Heart right ventricle (tissue), 16 donors: ENCODE measurements at regions of chr17 and their contacts with region 1.

Region 1: DNA sequence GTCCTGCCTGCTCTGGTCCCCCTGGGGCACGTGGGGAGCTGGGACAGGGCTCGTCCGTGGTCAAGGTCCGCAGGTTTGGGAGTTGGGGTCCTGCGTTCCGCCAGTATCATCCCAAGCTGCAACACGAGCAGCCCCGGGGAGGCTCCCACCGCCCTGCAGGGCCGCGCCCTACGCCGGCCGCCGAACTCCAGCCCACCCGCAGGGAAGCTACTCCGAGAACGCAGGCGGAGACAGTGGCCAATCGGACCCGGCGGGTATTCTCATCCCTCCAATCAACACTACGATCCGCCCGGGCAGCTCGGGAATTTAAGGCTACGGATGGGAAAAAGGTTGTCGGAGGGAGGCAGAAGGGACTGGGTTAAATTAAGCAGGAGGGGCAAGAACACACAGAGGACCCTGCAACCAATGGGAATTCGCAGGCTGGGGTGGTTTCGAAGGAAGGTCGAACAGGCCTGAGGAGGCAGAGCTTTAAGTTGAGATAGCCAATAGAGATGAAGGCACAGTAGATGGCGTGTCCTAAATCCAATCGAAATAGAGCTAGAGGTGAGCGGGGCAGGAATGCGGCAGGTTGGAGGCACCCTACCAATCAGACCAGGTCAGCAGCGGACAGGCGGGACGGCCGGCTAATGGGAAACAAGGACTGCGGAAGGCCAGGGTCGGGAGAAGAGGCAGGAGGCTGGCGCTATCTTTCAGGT is 626 bp downstream of the SPAG7 start:
- DNase-seq: peak; percentile 96 to 99
- ATAC-seq: peak; percentile 88 to 95 (median 92)
- H3K4me3 ChIP-seq: peak overlapping the region; percentile 53 to 82 (median 72)
- H3K27ac ChIP-seq: peak overlapping the region; percentile 89 to 97 (median 96)
- H3K4me1 ChIP-seq: peaks cover 11 to 45% (median 34%) of the 10 kb centered on the region in 9 donors
- H3K27me3 ChIP-seq: no peaks in the 10 kb centered on the region
- CTCF ChIP-seq: no peak

Region 2: DNA sequence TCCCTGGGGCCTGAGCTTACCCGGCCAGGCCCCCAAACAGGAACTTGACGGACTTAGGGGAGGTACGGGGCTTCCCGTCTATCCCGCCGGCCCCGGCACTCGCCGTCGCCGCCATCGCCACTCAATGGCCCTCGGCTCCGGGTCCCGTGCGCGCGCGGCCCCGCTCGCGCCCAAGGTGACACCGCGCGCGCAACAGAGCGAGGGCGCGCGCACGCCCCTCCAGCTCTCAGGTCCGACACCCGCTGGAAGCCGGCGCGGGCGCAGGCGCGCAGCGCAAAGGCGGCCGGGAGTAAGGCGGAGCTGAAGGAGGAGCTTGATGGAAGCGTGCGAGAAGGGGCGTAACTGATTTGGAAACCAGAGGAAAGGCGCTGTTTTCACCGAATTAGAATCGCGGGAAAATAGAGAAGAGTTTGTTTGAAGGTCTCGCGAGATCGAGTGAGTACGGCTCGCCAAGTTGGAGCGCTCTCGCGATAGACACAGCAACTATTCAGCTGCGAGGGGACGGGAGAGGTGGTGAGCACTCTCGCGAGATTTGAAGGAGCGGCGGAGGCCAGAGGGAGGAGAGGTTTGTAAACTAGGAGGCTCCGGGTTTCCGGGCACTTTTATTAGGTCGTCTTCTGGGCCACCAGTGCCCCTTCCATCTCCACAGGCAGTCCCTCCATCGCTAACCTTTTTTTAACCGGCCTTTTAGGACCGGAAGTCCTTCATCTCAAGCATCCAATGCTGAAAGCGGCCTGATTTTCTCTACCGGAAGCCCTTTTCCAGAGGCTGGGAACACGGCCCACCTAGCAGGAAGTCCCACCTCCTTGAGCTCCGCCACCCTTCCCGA is 27.0 kb before region 1 on chr17 and contains the starts of genes RNF167 and SLC25A11:
- intact Hi-C with region 1: loop called in 2 of 10 experiments (anchors 1 kb)
- DNase-seq: peak; percentile 92 to 96
- ATAC-seq: peak; percentile 93 to 96 (median 95)
- H3K4me3 ChIP-seq: peak within 1 kb of the TSS; percentile 50 to 95 (median 85)
- H3K27ac ChIP-seq: peak within 1 kb of the TSS; percentile 89 to 98 (median 94)
- H3K4me1 ChIP-seq: peaks cover 18 to 65% (median 42%) of the 10 kb centered on the region in 9 donors
- H3K27me3 ChIP-seq: no peaks in the 10 kb centered on the region
- CTCF ChIP-seq: peak in 2 of 9 donors; percentile 12 to 15
- total RNA-seq, gene RNF167: 65.0 to 104 (median 80.9) TPM
- total RNA-seq, gene SLC25A11: 181 to 312 (median 242) TPM

Region 3: GRCh38 chr17:4948931-4949320 is 18.1 kb before region 1 on chr17:
- intact Hi-C with region 1: loop called in 7 of 10 experiments (anchors 1 to 2 kb)
- DNase-seq: peak; percentile 83 to 87
- ATAC-seq: peak; percentile 72 to 87 (median 82)
- H3K4me3 ChIP-seq: peak overlapping the region; percentile 32 to 100 (median 98)
- H3K27ac ChIP-seq: peak overlapping the region; percentile 89 to 100 (median 99)
- H3K4me1 ChIP-seq: peaks cover 18 to 76% (median 51%) of the 10 kb centered on the region in 9 donors
- H3K27me3 ChIP-seq: no peaks in the 10 kb centered on the region
- CTCF ChIP-seq: no peak

Region 4: GRCh38 chr17:4997302-4998026 is 30.5 kb after region 1 on chr17 and contains the starts of genes INCA1 and KIF1C:
- intact Hi-C with region 1: loop called in 1 of 10 experiments (anchors 1 kb)
- DNase-seq: peak; percentile 94 to 95
- ATAC-seq: peak; percentile 88 to 96 (median 92)
- H3K4me3 ChIP-seq: peak within 1 kb of the TSS; percentile 67 to 100 (median 95)
- H3K27ac ChIP-seq: peak within 1 kb of the TSS; percentile 87 to 97 (median 94)
- H3K4me1 ChIP-seq: peaks cover 18 to 44% (median 30%) of the 10 kb centered on the region in 9 donors
- H3K27me3 ChIP-seq: no peaks in the 10 kb centered on the region
- CTCF ChIP-seq: peak in 6 of 9 donors; percentile 9 to 26 (median 22)
- total RNA-seq, gene INCA1: 1.8 to 2.9 (median 2.2) TPM
- total RNA-seq, gene KIF1C: 565 to 826 (median 598) TPM